ENCODE measurements at regions of chr11 and their contacts with region 1.

Region 1: GRCh38 chr11:28529540-28530410 is 421.6 kb downstream of the METTL15 start:
- DNase-seq: peak; percentile 31 to 62 (median 50)
- H3K4me3 ChIP-seq: no peak overlapping the region
- H3K27ac ChIP-seq: no peak overlapping the region
- H3K4me1 ChIP-seq: no peaks in the 10 kb centered on the region
- H3K27me3 ChIP-seq: peaks cover 0 to 3% (median 0%) of the 10 kb centered on the region in 5 experiments

Region 2: GRCh38 chr11:27698872-27699474 is 830.8 kb before region 1 on chr11:
- CTCF ChIA-PET with region 1: interaction called, 44 read pairs
- POLR2A ChIA-PET with region 1: no interaction called
- DNase-seq: peak; percentile 77 to 89 (median 86)
- H3K4me3 ChIP-seq: peak overlapping the region in 2 of 7 experiments; percentile 20 to 46
- H3K27ac ChIP-seq: no peak overlapping the region
- H3K4me1 ChIP-seq: peaks cover 0 to 29% (median 26%) of the 10 kb centered on the region in 4 experiments
- H3K27me3 ChIP-seq: peaks cover 29 to 85% (median 42%) of the 10 kb centered on the region in 5 experiments

Region 3: DNA sequence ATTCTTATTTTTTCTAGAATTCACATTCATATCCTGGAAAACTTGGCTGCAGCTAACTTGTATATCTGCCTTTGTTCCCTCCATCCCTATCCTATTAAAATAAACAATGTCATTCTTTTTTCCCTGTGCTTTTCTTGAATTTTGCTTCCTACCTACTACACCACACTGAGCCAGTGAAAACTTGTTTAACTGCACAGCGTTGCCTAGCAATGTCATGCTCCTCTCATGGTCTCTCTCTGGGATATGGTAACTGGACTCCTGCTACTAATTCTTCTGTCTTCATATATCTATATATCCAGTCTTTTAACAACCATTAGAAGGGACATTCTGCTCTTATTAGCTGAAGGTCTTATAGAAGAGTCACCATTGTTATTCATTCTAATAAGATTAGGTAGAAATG is 12.8 kb after region 1 on chr11:
- CTCF ChIA-PET with region 1: interaction called, 11 read pairs
- POLR2A ChIA-PET with region 1: no interaction called
- DNase-seq: no peak
- H3K4me3 ChIP-seq: no peak overlapping the region
- H3K27ac ChIP-seq: no peak overlapping the region
- H3K4me1 ChIP-seq: no peaks in the 10 kb centered on the region
- H3K27me3 ChIP-seq: peaks cover 0 to 2% (median 0%) of the 10 kb centered on the region in 5 experiments

Region 4: DNA sequence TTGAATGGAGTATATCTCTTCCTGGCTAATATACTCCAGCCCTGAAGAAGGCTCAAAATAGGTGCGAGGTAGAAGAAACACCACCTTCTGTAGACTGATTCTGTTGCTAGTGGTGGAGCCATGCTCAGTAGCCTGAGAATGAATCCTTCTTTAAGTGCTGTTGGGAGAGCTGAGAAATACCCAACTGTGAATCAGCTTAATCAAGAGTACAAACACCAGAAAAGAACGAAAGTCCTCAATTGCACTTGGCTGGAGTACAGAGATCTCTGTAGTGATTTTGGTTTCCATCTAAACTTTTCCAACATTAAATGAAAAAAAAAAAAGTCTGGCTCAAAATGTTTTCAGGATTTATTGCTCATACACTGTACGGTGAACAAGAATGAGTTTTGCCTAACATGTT is 197.5 kb after region 1 on chr11:
- CTCF ChIA-PET with region 1: no interaction called
- POLR2A ChIA-PET with region 1: no interaction called
- DNase-seq: no peak
- H3K4me3 ChIP-seq: no peak overlapping the region
- H3K27ac ChIP-seq: no peak overlapping the region
- H3K4me1 ChIP-seq: no peaks in the 10 kb centered on the region
- H3K27me3 ChIP-seq: no peaks in the 10 kb centered on the region